ENCODE measurements at regions of chr14 and their contacts with region 1.

Region 1: DNA sequence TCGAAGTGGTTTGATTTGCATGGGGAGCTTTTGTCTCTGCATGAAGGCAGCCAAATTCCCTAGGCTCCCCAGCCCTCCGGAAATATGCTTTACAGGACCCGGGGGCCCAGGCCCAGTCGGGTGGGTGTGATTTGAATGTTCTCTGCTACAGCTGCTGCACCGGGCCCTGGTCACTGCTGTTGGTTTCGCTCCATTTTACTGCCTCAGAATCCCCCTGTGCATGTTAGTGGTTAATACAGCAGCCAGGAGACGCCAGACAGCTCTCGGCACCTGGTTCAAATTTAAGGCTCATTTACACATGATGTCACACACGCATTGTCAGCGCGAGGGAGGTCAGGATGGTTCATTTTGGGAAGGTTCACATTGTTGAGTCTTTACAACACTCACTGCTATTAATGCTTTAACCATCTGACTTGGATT is 99.6 kb downstream of the SLC38A6 start:
- DNase-seq: peak; percentile 22
- ATAC-seq: peak; percentile 93
- H3K4me3 Mint-ChIP-seq: peak overlapping the region; percentile 30
- H3K27ac Mint-ChIP-seq: peak overlapping the region; percentile 36
- H3K4me1 Mint-ChIP-seq: peaks cover 20% of the 10 kb centered on the region
- H3K27me3 Mint-ChIP-seq: no peaks in the 10 kb centered on the region
- CTCF ChIP-seq: no peak

Region 2: GRCh38 chr14:61034416-61035120 is 46.0 kb before region 1 on chr14:
- CTCF ChIA-PET with region 1: no interaction called
- POLR2A ChIA-PET with region 1: interaction called, 5 read pairs
- intact Hi-C with region 1: loop called (anchors 5 kb)
- DNase-seq: no peak
- ATAC-seq: no peak
- H3K4me3 Mint-ChIP-seq: no peak overlapping the region
- H3K27ac Mint-ChIP-seq: peak overlapping the region; percentile 67
- H3K4me1 Mint-ChIP-seq: peaks cover 19% of the 10 kb centered on the region
- H3K27me3 Mint-ChIP-seq: no peaks in the 10 kb centered on the region
- CTCF ChIP-seq: no peak

Region 3: GRCh38 chr14:61106959-61107641 is 26.5 kb after region 1 on chr14:
- CTCF ChIA-PET with region 1: no interaction called
- POLR2A ChIA-PET with region 1: no interaction called
- intact Hi-C with region 1: loop called (anchors 2 kb)
- DNase-seq: no peak
- ATAC-seq: no peak
- H3K4me3 Mint-ChIP-seq: no peak overlapping the region
- H3K27ac Mint-ChIP-seq: no peak overlapping the region
- H3K4me1 Mint-ChIP-seq: peaks cover 11% of the 10 kb centered on the region
- H3K27me3 Mint-ChIP-seq: peaks cover 2% of the 10 kb centered on the region
- CTCF ChIP-seq: no peak

Region 4: GRCh38 chr14:61120576-61120975 is 40.0 kb after region 1 on chr14:
- CTCF ChIA-PET with region 1: no interaction called
- POLR2A ChIA-PET with region 1: no interaction called
- intact Hi-C with region 1: loop called (anchors 1 kb)
- DNase-seq: no peak
- ATAC-seq: no peak
- H3K4me3 Mint-ChIP-seq: peak overlapping the region; percentile 0
- H3K27ac Mint-ChIP-seq: peak overlapping the region; percentile 3
- H3K4me1 Mint-ChIP-seq: peaks cover 17% of the 10 kb centered on the region
- H3K27me3 Mint-ChIP-seq: no peaks in the 10 kb centered on the region
- CTCF ChIP-seq: no peak